BJ (cell line): ENCODE measurements at regions of chr2 and their contacts with region 1.

Region 1: DNA sequence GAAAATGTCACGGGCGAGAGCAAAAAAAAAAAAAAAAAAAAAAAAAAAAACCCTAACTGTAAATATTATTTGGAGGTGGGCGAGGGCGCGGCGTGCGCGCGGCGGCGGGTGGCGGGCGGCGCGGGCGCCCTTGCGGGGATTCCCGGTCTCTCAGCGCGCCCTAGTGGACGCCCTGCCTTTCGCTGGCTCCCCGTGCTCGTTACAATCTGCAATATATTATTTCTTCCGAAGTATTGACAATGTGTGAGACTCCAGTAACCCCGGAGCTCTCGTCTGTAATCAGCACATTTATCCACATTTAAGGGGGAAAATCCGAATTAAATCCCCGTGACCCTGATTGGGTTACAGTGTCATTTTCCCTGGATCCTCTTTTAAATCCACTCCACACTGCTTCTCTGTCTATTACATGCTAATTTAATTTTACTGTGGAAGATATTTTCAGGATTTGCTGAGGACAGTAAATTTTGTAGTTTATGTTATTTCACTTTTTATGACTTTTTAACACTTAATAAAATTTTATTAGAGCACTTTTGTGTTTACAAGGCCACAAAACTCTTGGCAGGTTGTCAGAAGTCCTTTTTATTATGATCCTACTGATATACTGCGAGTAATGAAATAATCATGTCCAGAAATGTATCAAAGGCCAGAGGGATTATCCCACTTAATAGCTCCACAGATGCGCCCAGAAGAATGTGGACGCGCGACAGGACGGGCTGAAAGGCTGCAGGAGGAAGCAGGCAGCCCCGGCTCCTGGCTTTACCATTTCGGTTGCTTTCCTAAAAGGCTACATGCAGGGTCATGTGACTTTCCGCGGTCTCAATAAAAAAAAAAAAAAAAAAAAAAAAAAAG is 369.1 kb downstream of the MTX2 start:
- DNase-seq: no peak
- H3K4me3 ChIP-seq: peak overlapping the region; percentile 59
- H3K27me3 ChIP-seq: peaks cover 1% of the 10 kb centered on the region
- CTCF ChIP-seq: peak; percentile 70

Region 2: DNA sequence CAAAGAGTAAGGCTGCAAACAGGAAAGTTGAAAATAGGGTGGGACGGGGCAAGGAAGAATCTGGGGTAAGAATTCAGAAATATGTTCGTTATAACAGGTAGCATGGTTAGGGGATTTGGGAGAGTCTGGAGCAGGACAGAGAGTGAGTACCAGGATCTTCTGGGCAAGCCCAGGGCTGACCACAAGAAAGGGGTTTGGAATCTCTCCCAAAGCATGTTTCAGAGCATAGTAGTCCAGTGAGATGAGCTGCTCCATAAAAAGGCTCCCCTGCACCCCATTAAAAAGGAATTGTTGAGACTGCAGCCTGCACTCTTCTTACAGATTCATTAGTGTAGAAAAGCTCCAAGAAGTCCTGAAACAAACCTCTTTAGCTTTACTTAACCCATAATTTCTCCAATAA is 78.1 kb before region 1 on chr2:
- CTCF ChIA-PET with region 1: interaction called, 12 read pairs
- POLR2A ChIA-PET with region 1: no interaction called
- DNase-seq: no peak
- H3K4me3 ChIP-seq: no peak overlapping the region
- H3K27me3 ChIP-seq: peaks cover 5% of the 10 kb centered on the region
- CTCF ChIP-seq: no peak

Region 3: GRCh38 chr2:176626796-176627195 is 11.6 kb before region 1 on chr2:
- CTCF ChIA-PET with region 1: no interaction called
- POLR2A ChIA-PET with region 1: no interaction called
- DNase-seq: no peak
- H3K4me3 ChIP-seq: no peak overlapping the region
- H3K27me3 ChIP-seq: peaks cover 2% of the 10 kb centered on the region; the same call in 1 of the 2 replicates
- CTCF ChIP-seq: no peak

Region 4: DNA sequence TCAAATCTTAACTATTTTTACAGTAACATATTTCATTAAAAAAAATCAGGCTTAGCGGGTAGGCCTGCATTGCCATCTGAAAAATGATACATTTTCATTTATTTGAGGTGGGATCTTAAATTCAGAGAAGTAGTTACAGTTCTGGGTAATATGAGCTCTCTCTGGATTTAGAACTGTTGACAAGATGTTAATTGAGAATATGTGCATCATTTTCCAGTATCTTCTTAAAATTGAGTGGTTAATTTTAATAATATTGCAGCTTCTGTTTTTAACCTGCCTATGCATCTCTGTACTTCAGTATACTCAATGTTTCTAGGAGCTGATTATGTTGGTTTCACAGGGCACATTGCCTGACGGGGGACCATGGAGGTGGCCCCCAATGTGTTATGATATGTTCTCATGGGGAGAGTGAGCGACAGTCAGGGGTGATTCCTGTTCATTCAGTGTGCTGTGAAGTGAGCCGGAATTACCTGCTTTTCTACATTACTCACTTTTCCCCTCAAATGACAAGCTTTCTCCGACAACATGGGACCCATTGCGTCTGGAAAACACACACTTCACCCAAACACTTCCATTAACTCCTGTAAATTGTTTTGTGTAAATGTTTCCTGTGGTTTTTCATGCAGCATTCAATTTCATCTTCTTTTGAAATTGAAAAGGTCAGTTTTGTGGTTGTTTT is 37.0 kb after region 1 on chr2:
- CTCF ChIA-PET with region 1: no interaction called
- POLR2A ChIA-PET with region 1: no interaction called
- DNase-seq: no peak
- H3K4me3 ChIP-seq: no peak overlapping the region
- H3K27me3 ChIP-seq: peaks cover 2% of the 10 kb centered on the region
- CTCF ChIP-seq: no peak